ENCODE measurements at regions of chr6 and their contacts with region 1.

Region 1: DNA sequence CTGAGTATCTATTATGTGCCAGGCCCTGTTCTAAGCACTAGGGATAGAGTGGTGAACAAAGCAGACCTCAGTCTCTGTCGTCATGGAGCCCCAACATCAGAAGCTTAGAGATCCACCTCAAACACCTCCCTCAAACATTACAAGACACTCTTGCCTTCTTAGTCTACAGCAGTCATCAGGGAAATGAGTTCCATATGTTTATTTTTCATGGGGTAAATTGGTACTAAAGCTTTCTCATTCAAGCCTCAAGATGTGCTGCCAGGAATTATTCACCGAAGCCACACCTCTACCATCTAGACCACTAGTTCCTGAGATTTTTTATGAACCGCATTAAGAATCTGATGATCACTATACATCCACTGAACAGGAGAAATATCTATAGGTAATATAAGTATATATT is 59.0 kb upstream of the TFB1M start:
- DNase-seq: no peak
- H3K4me3 ChIP-seq: no peak overlapping the region
- H3K27ac ChIP-seq: no peak overlapping the region
- H3K4me1 ChIP-seq: peaks cover 8% of the 10 kb centered on the region
- H3K27me3 ChIP-seq: no peaks in the 10 kb centered on the region
- CTCF ChIP-seq: no peak

Region 2: DNA sequence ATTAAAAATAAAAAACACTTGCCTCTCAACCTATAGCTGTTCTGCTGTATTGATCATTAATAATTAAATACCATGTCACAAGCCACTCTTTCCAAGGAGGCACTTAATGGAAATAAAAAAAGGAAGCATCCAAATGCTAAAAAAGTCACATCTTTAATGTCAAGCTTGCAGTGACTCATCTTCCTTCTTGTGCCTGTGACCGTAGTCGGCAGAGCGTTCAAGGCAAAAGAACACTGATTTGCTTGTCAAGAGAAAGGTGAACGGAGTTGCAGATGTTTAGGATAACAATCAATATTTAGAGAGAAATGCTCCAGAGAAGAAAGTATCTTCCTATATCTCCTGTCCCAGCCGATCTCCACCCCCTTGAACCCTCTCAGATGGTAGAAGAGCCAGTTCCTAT is 1675.3 kb before region 1 on chr6:
- CTCF ChIA-PET with region 1: no interaction called
- dilution Hi-C with region 1: no loop called
- in situ Hi-C with region 1: no loop called
- intact Hi-C with region 1: no loop called
- DNase-seq: no peak
- H3K4me3 ChIP-seq: no peak overlapping the region
- H3K27ac ChIP-seq: no peak overlapping the region
- H3K4me1 ChIP-seq: no peaks in the 10 kb centered on the region
- H3K27me3 ChIP-seq: peaks cover 1% of the 10 kb centered on the region
- CTCF ChIP-seq: no peak

Region 3: DNA sequence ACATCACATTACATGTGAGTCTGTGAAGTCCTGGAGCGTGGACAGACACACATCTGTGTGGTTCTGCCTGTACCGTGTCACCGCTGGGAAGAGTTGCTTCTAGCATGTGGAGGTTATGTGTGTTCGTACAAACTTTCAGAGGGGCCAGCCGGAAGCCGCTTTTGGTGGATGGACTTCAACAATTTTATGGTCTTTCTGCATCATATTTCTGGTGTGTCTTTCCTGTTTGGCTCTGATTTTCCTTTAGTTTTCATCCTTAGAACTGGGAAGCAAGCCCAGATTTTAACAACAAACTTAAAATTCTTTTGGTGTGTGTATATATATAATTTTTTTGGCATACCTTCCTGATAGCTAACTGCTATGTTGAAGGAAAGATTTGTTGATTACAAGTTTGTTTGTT is 306.9 kb before region 1 on chr6:
- CTCF ChIA-PET with region 1: no interaction called
- dilution Hi-C with region 1: no loop called
- in situ Hi-C with region 1: no loop called
- intact Hi-C with region 1: no loop called
- DNase-seq: no peak
- H3K4me3 ChIP-seq: no peak overlapping the region
- H3K27ac ChIP-seq: no peak overlapping the region
- H3K4me1 ChIP-seq: peaks cover 4% of the 10 kb centered on the region
- H3K27me3 ChIP-seq: no peaks in the 10 kb centered on the region
- CTCF ChIP-seq: no peak

Region 4: GRCh38 chr6:155828989-155829388 is 455.7 kb after region 1 on chr6:
- CTCF ChIA-PET with region 1: interaction called, 16 read pairs
- dilution Hi-C with region 1: no loop called
- in situ Hi-C with region 1: no loop called
- intact Hi-C with region 1: no loop called
- DNase-seq: peak; percentile 54
- H3K4me3 ChIP-seq: no peak overlapping the region
- H3K27ac ChIP-seq: no peak overlapping the region
- H3K4me1 ChIP-seq: peaks cover 6% of the 10 kb centered on the region
- H3K27me3 ChIP-seq: no peaks in the 10 kb centered on the region
- CTCF ChIP-seq: no peak